Cardiac septum (tissue), 1 donor: ENCODE measurements at regions of chr6 and their contacts with region 1.

Region 1: GRCh38 chr6:41424370-41425058 is 89.1 kb downstream of the NCR2 start:
- DNase-seq: peak; percentile 87

Region 2: GRCh38 chr6:40819182-40819834 is 605.2 kb before region 1 on chr6:
- intact Hi-C with region 1: no loop called
- DNase-seq: no peak

Region 3: DNA sequence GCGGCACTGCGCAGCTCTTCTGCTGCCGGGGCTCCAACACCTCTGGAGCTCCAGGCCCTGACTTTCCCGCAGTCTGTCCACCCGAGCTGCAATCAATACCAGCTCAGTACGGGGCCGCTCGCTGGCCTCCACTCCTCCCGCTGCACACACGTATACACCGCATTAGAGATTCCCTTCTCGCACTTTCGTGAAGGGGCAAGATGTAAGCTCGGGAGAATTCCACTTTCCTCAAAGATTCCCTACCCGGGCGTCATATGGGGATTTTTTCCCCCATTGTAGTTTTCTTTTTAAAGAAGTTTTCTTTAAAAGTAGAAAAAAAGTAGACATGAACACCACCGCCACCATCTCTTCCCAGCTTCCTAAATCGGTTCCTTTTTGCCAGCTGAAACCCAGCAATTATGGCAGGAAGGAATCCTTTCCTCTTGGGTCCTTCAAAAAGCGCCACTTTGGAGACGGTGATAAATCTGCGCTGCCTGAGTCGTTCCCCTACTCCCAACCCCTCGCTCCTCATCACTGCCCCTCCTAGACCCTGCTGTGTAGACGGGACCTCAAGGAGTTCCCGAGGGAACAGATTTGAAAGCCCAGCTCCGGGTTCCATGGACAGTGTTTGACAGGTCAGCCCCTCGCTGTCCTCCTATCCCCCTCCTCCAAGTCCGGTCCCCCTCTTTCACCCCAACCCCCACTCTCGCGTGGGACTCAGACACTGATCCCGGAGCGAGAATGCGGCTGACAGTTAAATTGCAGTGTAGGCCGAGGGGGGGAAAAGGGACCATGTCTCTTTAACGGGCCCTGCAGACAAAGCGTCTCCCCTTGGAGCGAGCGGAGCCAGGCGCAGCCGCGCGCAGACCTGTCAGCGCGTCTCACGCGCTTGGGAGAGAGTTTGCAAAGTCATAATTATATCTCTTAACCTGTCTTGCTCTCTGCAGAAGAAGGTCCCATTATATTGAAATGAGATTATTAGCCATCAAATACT is 49.6 kb before region 1 on chr6:
- intact Hi-C with region 1: loop called (anchors 5 kb)
- DNase-seq: peak; percentile 22

Region 4: DNA sequence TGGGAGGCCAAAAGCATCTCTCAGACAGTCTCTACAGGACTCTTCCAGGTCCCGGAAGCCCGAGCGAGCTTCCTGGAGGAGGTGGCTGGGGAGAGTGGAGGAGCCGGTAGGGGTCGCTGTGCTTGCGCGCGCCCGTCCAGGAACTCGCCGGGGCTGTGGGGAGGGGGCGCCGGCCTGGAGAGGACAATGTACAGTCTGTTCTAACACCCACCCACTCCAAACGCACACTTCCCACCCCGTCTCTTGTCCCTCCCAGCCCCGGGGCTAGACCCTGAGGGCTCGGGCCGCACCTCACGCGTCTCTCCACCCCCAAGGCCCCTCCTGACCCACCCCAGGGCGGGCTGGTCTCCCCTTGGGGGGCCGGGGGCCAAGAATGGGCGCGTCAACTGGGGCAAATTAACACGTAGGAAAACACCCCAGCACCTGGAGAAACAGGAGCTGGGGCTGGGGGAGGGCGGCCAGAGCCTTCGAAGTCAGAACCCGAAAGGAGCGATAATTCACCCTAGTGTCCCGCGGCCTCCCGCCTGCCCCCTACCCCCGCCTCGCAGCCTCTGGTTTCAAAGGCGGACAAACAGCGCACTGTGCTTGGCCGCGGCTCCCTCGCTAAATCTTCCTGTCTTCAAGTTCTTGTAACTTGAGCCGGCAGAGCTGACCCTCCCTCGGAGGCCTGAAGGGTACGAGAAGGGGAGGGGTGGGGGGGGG is 18.4 kb after region 1 on chr6:
- intact Hi-C with region 1: loop called (anchors 2 kb)
- DNase-seq: no peak

Region 5: DNA sequence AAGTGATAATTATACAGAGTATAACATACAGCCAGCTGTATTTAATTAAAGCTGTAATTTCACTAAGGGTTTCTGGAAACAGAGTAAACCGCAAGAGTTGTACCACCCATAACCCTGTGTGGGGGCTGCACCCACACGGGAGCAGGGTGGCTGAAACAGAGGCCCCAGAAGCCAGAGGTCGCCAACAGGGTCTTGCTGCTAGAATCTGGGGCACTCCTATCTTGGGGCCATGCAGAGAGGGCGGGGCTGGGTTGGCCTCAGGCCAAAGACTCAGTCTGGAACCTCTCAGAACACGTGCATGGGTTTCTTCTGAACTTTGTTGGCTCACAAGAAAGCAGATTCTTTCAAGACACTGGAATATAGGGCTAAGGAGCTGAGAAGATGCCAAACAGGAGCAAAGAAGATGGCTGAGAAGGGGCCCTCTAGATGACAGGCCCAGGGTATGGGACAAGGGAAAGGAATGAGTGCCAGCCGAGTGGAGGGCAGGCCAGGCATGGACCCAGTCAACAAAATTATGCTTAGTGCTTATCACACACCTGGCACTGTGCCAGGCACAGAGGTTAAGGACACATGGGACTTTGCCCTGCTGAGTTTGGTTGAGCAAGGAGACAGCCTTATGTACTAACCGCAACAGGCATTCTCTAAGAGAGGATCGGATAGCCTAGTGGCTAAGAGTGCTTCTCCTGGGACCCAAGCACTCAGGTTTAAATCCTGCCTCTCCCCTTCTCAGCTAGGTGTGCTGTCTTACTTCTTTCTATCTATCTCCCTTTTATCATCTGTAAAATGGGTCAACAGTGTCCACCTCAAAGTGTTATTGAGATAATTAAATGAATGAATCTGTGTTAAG is 25.1 kb after region 1 on chr6:
- intact Hi-C with region 1: loop called (anchors 2 kb)
- DNase-seq: no peak

Region 6: DNA sequence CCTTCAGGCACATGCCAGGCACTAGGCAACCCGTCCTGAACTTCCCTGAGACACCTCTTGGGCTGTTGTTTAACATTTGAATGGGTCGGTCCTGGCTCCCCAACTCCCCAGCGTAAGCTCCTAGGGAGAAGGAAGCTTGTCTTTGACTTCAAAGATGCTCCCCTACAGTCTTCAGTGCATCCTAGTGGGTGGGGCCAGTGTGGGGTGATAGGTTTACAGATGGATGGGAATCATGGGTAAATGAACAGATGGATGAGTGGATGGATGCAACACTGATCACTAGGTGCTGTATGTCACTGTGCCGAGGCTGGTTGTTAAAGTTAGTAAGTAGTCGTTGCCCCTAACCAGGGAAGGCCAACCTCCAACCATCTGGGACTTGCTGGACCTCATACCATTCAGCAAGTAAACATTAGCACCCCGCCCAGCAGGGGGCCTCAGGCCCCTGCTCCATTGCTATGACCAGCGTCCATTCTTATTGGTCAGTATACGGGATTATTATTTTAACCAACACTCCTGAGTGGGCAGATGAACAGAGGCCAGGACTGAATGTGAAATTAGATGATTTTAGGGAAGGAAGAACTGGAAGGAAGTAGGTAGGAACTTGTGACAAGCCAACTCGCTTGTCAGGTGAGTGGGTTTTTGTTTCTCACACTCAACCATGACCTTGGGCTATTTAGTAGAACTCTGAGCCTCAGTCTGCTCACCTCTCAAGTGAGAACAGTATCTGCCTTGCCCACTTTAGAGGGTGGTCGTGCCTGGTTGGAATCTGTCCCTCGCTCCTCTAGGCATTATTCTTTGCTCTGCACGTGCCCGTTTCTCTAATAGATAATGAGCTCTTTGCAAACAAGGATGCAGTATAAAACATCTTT is 38.8 kb after region 1 on chr6:
- intact Hi-C with region 1: no loop called
- DNase-seq: no peak

Region 7: GRCh38 chr6:41505122-41506049 is 80.9 kb after region 1 on chr6:
- intact Hi-C with region 1: loop called (anchors 10 kb)
- DNase-seq: peak; percentile 81

Region 8: DNA sequence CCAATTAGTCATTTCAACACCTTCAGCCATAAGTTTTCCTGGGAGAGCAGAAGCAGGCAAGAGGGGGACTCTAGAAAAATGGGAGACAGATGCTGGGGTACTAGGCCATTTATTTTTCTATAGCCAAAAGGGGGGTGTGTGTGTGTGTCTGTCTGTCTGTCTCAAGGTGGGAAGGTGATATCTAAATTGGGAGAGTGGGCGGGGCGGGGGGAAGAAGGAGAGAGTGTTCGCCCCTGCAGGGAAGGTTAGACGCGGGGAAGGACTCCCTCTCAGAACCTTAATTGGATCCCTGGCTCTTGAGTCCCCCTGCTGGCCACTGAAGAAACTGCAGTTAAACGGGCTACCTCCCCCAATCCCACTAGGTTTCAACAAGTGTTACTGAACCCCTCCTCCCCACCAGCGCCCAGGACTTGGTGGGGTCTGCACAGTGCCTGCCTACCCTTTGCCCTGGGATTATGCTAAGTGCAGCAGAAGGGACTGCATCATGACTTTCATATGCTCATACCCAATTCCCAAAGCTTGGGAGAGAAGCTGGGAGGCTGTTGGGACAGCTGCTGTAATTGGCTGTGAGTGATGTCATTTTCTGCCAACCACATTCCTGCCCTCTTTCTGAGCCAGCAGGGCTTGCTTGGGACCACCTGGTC is 167.5 kb after region 1 on chr6:
- intact Hi-C with region 1: loop called (anchors 2 kb)
- DNase-seq: no peak

Region 9: DNA sequence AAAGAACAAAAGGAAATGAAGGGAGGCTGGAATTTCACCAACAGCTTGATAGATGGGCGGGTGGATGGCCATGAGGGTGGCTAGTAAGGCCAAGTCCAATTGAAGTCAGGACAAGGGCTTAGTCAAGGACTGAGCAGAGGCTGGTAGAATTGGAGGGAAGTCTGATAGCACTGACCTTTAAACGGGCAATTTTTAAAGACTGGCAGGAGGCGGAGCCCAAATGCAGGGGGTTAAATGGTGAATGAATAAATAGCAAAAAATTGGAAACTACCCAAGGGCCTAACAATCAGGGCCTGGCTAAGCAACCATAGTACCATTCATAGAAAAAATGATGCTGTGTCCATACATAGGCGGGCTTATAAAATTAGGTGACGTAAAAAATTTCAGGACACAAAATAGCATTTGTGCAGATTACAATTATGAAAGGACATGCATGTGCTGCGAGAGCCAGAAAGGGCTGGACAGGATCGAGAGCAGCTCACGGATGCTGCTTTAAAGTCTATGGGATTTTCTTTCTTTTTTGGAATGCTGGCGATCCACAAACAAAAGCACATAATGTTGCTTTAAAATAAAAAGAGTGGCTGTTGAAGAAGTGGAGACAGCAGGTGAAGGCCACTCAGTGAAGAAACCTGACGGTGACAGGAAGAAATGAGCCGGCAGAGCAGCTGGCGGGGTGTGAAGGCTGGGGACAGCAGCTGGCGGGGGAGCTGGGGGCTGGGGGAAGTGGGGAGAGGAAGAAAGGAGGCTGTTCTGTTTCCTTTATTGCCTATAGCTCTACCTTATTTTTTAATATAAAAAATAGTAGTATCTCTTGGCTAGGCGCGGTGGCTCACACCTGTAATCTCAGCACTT is 583.0 kb after region 1 on chr6:
- intact Hi-C with region 1: no loop called
- DNase-seq: peak; percentile 69